ENCODE measurements at regions of chr11 and their contacts with region 1.

Region 1: GRCh38 chr11:9265211-9266131 is at the start of gene DENND5A:
- DNase-seq: peak; percentile 80
- ATAC-seq: peak; percentile 78
- H3K4me3 ChIP-seq: peak within 1 kb of the TSS; percentile 87 to 96 (median 94)
- H3K27ac ChIP-seq: peak within 1 kb of the TSS; percentile 87
- H3K4me1 ChIP-seq: peaks cover 55% of the 10 kb centered on the region
- H3K27me3 ChIP-seq: no peaks in the 10 kb centered on the region; a peak in 1 of 5 replicates
- CTCF ChIP-seq: peak; percentile 45; the same call in 1 of the 2 replicates
- EP300 ChIP-seq: no peak
- POLR2A ChIP-seq: peak; percentile 65 to 75
- RAD21 ChIP-seq: no peak
- total RNA-seq, gene DENND5A: 57.7 and 63.3 TPM in 2 replicates

Region 2: DNA sequence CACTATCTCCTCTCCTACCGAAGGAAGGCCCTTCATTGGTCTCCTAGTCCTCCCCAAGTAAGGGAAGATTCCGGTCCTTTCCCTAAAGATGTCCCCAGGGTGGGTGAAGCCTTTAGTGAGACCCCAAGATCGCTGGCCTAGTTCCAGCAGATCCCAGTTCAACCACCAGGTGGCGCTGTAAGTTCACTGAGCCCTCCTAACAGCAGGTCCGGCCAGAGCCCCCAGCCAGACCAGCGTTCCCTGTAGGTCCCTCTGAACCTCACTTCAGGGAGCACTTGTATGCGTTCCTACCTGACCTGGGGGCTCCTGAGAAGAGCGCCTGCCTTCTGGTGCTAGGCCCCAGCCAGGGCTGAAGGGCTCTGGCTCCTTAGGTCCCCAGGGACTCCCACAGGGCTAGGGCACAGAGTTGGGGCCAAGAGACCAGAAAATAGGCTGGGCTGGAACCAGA is 1039.9 kb before region 1 on chr11:
- CTCF ChIA-PET with region 1: no interaction called
- POLR2A ChIA-PET with region 1: no interaction called
- in situ Hi-C with region 1: no loop called
- intact Hi-C with region 1: no loop called
- DNase-seq: peak; percentile 39
- ATAC-seq: peak; percentile 86
- H3K4me3 ChIP-seq: no peak overlapping the region
- H3K27ac ChIP-seq: no peak overlapping the region
- H3K4me1 ChIP-seq: no peaks in the 10 kb centered on the region
- H3K27me3 ChIP-seq: peaks cover 0 to 29% of the 10 kb centered on the region in 2 experiments; a peak in 4 of 5 replicates
- CTCF ChIP-seq: peak; percentile 92
- EP300 ChIP-seq: no peak
- POLR2A ChIP-seq: no peak
- RAD21 ChIP-seq: peak; percentile 79

Region 3: DNA sequence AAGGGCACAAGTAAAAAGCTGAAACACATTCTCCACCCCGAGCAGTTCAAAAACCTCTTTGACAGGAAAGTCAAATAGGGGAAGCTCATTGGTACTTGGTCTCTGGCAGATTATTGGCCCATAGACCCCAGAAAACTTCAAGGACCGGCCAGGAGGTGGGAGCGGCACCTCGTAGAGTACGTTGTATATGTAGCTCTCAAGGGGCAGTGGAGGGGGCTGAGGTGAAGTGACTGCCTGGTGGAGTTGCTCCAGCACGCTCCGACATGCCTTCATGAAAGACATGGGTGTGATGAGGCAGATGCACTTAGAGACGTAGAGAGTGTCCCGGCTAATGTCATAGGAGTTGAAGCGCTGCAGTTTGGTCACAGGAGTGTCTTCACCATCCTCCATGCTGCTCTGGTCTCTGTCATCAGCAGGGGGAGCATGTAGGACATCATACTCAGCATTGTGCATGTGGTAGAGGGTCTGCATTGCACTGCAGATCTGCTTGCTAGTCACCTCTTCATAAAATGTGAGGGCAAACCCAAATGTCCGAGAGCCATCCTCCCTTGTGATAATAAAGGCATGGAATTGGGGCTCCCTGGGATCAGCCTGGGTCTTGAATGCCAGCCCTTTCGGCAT is 61.7 kb before region 1 on chr11:
- CTCF ChIA-PET with region 1: no interaction called
- POLR2A ChIA-PET with region 1: no interaction called
- in situ Hi-C with region 1: no loop called
- intact Hi-C with region 1: loop called (anchors 5 kb)
- DNase-seq: peak; percentile 10
- ATAC-seq: peak; percentile 79
- H3K4me3 ChIP-seq: no peak overlapping the region
- H3K27ac ChIP-seq: no peak overlapping the region
- H3K4me1 ChIP-seq: no peaks in the 10 kb centered on the region
- H3K27me3 ChIP-seq: no peaks in the 10 kb centered on the region
- CTCF ChIP-seq: peak; percentile 58
- EP300 ChIP-seq: no peak
- POLR2A ChIP-seq: no peak
- RAD21 ChIP-seq: no peak

Measured in HepG2 (cell line).